Motor neuron (in vitro differentiated cells): ENCODE measurements at regions of chr1 and their contacts with region 1.

Region 1: GRCh38 chr1:103514920-103515503 is 10.5 kb upstream of the RNPC3 start:
- ATAC-seq: peak in 7 of 8 experiments; percentile 38 to 66 (median 48)
- H3K4me3 ChIP-seq: no peak overlapping the region
- H3K27ac ChIP-seq: no peak overlapping the region
- H3K4me1 ChIP-seq: no peaks in the 10 kb centered on the region

Region 2: DNA sequence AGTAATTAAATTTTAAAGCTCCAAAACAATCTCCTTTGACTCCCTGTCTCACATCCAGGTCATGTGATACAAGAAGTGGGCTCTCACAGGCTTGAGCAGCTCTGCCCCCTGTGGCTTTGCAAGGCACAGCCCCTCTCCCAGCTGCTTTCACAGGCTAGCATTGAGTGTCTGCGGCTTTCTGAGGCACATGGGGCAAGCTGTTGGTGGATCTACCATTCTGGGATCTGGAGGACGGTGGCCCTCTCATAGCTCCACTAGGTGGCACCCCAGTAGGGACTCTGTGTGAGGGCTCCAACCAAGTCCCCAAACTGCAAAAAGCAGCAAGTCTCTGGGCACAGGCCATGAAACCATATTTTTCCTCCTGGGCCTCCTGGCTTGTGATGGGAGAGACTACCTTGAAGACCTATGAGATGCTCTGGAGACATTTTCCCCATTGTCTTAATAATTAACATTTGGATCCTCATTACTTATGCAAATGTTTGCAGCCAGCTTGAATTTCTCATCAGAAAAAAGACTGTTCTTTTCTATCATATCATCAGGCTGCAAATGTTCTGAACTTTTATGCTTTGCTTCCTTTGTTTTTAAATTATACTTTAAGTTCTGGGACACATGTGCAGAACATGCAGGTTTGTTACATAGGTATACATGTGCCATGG is 964.2 kb before region 1 on chr1:
- in situ Hi-C with region 1: loop called in 1 of 9 experiments (anchors 25 kb)
- ATAC-seq: peak in 1 of 8 experiments; percentile 76
- H3K4me3 ChIP-seq: no peak overlapping the region
- H3K27ac ChIP-seq: no peak overlapping the region
- H3K4me1 ChIP-seq: no peaks in the 10 kb centered on the region

Region 3: DNA sequence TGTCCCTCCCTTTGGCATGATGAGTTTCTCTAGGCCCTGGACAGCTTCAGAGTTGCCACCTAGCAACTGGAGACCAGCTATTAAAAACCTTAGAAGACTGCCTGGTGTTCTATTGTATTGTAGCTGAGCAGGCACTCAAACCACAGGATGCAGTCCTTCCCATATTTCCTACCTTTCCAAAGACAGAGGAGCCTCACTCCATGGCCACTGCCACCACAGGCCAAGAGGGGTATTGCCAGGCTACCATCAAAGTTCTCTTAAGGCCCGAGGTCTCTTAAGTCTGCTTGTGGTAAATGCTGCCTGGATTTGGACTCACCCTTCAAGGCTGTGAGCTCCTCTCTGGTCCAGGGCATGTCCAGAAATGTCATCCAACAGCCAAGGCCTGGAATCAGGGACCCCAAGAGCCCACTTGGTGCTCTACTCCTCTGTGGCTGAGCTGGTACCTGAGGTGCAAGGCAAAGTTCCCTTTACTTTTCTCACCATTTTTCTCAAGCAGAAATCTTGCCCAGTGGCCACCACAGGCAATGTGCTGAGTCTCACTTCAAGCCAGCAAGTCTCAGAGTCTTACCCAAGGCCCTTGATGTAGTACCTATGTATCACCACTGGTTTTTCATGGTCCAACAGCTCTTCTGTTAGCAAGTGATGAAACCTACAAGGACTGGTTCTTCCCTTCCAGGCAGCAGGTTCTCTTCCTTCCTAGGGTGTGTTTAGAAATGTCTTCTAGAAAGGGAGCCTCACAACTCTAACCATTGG is 504.1 kb after region 1 on chr1:
- in situ Hi-C with region 1: no loop called
- ATAC-seq: no peak
- H3K4me3 ChIP-seq: no peak overlapping the region
- H3K27ac ChIP-seq: no peak overlapping the region
- H3K4me1 ChIP-seq: no peaks in the 10 kb centered on the region